Gastrocnemius medialis (tissue), 4 donors: ENCODE measurements at regions of chr1 and their contacts with region 1.

Region 1: GRCh38 chr1:29230553-29231378 is at the start of gene MECR:
- DNase-seq: peak; percentile 86 to 92
- ATAC-seq: peak; percentile 96 to 98
- H3K4me3 ChIP-seq: peak within 1 kb of the TSS; percentile 71 to 87 (median 82)
- H3K27ac ChIP-seq: peak within 1 kb of the TSS; percentile 82 to 90 (median 86)
- H3K4me1 ChIP-seq: peaks cover 11 to 14% of the 10 kb centered on the region in 2 donors
- H3K27me3 ChIP-seq: no peaks in the 10 kb centered on the region
- CTCF ChIP-seq: peak in 2 of 5 experiments; percentile 16 to 22
- POLR2A ChIP-seq: peak; percentile 69 to 71
- total RNA-seq, gene MECR: 21.9 to 29.8 (median 26.6) TPM

Region 2: GRCh38 chr1:29181413-29182225 is 49.1 kb before region 1 on chr1 and contains the start of gene SRSF4:
- in situ Hi-C with region 1: no loop called
- intact Hi-C with region 1: loop called (anchors 2 kb)
- DNase-seq: peak; percentile 99
- ATAC-seq: peak; percentile 90 to 92
- H3K4me3 ChIP-seq: peak within 1 kb of the TSS; percentile 78 to 98 (median 82)
- H3K27ac ChIP-seq: peak within 1 kb of the TSS; percentile 94 to 100 (median 97)
- H3K4me1 ChIP-seq: peaks cover 40 to 48% of the 10 kb centered on the region in 2 donors
- H3K27me3 ChIP-seq: no peaks in the 10 kb centered on the region
- CTCF ChIP-seq: peak; percentile 57 to 81 (median 74)
- POLR2A ChIP-seq: peak; percentile 95 to 98
- total RNA-seq, gene SRSF4: 42.4 to 72.5 (median 65.4) TPM

Region 3: GRCh38 chr1:30085811-30086770 is 855.3 kb after region 1 on chr1:
- in situ Hi-C with region 1: loop called in 2 of 4 experiments (anchors 25 kb)
- intact Hi-C with region 1: loop called (anchors 5 kb)
- DNase-seq: no peak
- ATAC-seq: no peak
- H3K4me3 ChIP-seq: peak overlapping the region in 1 of 4 donors; percentile 21
- H3K27ac ChIP-seq: no peak overlapping the region
- H3K4me1 ChIP-seq: peaks cover 0 to 3% of the 10 kb centered on the region in 2 donors
- H3K27me3 ChIP-seq: peaks cover 0 to 4% (median 3%) of the 10 kb centered on the region in 3 donors
- CTCF ChIP-seq: peak; percentile 42 to 73 (median 54)
- POLR2A ChIP-seq: no peak

Region 4: GRCh38 chr1:30353637-30354036 is 1122.9 kb after region 1 on chr1:
- in situ Hi-C with region 1: loop called in 1 of 4 experiments (anchors 25 kb)
- intact Hi-C with region 1: no loop called
- DNase-seq: no peak
- ATAC-seq: peak in 1 of 2 donors; percentile 44
- H3K4me3 ChIP-seq: no peak overlapping the region
- H3K27ac ChIP-seq: no peak overlapping the region
- H3K4me1 ChIP-seq: no peaks in the 10 kb centered on the region
- H3K27me3 ChIP-seq: peaks cover 0 to 3% (median 0%) of the 10 kb centered on the region in 3 donors
- CTCF ChIP-seq: peak in 1 of 5 experiments; percentile 18
- POLR2A ChIP-seq: no peak

Region 5: DNA sequence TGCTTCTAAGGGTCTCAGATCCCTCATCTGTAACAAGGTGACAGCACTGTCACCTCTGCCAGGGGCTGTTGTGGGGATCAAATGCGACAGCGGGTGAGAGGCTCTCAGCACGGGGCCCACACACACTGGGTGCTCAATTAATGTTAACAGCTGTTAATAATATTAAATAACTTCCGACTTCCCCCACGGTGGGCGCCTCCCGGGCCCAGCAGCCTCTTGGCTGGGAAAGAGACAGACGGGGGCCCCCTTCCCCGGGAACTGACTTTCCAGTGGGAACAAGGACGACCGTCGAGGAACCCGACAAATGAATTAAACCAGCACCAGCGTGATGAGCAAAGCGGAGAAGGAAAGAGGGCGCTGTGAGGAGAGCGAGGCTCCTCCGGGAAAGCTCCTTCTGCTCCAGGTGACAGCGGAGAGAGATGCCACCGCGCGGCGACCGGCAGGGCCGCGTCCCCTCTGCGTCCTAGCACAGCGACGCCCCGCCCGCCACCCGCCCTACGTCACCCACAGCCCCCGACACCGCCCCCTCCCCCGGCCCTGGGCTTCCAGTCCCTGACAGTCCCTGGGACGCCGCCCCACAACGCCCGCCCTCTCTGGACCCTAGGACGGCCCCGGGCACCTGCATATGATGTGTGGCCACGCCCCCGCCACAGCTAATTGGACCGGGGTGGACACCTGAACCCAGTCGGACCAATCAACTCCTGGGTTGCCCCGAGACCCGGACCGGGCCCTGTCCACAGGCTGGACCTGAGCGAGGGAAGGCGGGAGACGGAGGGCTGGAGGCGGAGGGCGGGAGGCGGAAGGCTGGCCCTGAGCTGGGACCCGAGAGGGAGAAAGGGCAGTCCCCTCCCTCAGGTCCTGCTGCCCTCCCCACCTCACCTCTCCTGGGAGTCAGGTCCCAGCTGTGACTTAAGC is 1454.4 kb after region 1 on chr1:
- in situ Hi-C with region 1: loop called in 1 of 4 experiments (anchors 25 kb)
- intact Hi-C with region 1: no loop called
- DNase-seq: no peak
- ATAC-seq: no peak
- H3K4me3 ChIP-seq: no peak overlapping the region
- H3K27ac ChIP-seq: no peak overlapping the region
- H3K4me1 ChIP-seq: no peaks in the 10 kb centered on the region
- H3K27me3 ChIP-seq: peaks cover 31 to 40% (median 32%) of the 10 kb centered on the region in 3 donors
- CTCF ChIP-seq: no peak
- POLR2A ChIP-seq: no peak

Region 6: GRCh38 chr1:30718636-30719405 is 1488.1 kb after region 1 on chr1:
- in situ Hi-C with region 1: loop called in 2 of 4 experiments (anchors 5 to 10 kb)
- intact Hi-C with region 1: no loop called
- DNase-seq: peak; percentile 71 to 94
- ATAC-seq: peak; percentile 79 to 81
- H3K4me3 ChIP-seq: peak overlapping the region; percentile 60 to 85 (median 73)
- H3K27ac ChIP-seq: peak overlapping the region; percentile 97 to 98 (median 98)
- H3K4me1 ChIP-seq: peaks cover 0 to 3% of the 10 kb centered on the region in 2 donors
- H3K27me3 ChIP-seq: no peaks in the 10 kb centered on the region
- CTCF ChIP-seq: peak; percentile 98 to 100 (median 99)
- POLR2A ChIP-seq: peak; percentile 80 to 85